ENCODE measurements at regions of chr22 and their contacts with region 1.

Region 1: DNA sequence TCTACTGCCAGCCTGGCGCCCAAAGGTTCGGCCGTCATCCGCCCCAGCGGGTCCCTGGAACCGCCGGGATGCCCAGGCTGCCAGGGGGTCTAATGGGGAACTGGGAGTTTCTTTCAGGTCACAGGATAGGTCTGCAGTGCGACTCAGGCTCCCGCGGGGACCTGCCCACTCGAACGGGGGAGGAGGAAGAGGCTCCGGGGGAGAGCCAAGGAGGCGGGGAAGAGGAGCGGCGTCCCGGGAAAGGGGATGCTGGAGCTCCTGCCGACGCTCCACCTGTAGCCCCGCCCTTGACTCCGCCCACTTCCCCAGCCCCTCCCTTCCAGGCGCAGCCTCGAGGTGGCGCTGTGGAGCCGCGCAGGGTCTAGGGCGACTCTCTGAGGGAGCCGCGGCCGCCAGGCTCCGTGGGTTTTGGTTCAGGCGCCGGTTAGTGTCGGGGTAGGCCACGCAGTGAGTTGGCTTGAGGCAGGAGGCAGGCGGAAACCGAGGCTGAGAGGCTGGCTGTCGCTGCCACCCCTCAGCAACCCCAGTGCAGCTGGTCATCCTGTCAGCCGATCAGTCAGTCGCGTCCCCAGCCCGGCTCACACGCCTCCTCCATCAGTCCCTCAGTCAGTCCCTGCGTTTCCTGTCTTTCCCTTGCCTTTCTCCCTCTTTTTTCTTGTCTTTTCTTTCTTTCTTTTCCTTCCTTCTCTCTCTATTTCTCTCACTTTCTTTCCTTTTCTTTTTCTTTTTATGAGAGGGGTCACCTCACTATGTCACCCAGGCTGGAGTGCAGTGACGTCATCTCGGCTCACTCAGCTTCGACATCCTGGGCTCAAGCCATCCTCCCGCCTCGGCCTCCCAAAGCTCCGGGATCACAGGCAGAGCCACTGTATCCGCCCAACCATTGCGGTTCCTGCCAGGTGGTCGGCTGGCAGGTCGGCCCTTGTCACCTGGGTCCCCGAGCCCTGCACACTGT is 26.4 kb downstream of the YWHAH start:
- DNase-seq: peak; percentile 90
- H3K4me3 Mint-ChIP-seq: peak overlapping the region; percentile 68
- H3K27ac Mint-ChIP-seq: no peak overlapping the region
- H3K4me1 Mint-ChIP-seq: peaks cover 11% of the 10 kb centered on the region
- H3K27me3 Mint-ChIP-seq: no peaks in the 10 kb centered on the region

Region 2: GRCh38 chr22:31954535-31955523 is 15.9 kb before region 1 on chr22:
- CTCF ChIA-PET with region 1: interaction called, 13 read pairs
- intact Hi-C with region 1: no loop called
- DNase-seq: no peak
- H3K4me3 Mint-ChIP-seq: no peak overlapping the region
- H3K27ac Mint-ChIP-seq: no peak overlapping the region
- H3K4me1 Mint-ChIP-seq: peaks cover 68% of the 10 kb centered on the region
- H3K27me3 Mint-ChIP-seq: no peaks in the 10 kb centered on the region

Region 3: GRCh38 chr22:31960767-31961166 is 10.0 kb before region 1 on chr22:
- CTCF ChIA-PET with region 1: interaction called, 12 read pairs
- intact Hi-C with region 1: no loop called
- DNase-seq: no peak
- H3K4me3 Mint-ChIP-seq: no peak overlapping the region
- H3K27ac Mint-ChIP-seq: no peak overlapping the region
- H3K4me1 Mint-ChIP-seq: peaks cover 15% of the 10 kb centered on the region
- H3K27me3 Mint-ChIP-seq: no peaks in the 10 kb centered on the region

Region 4: GRCh38 chr22:32265882-32266767 is 295.4 kb after region 1 on chr22:
- CTCF ChIA-PET with region 1: interaction called, 11 read pairs
- intact Hi-C with region 1: no loop called
- DNase-seq: peak; percentile 84
- H3K4me3 Mint-ChIP-seq: no peak overlapping the region
- H3K27ac Mint-ChIP-seq: no peak overlapping the region
- H3K4me1 Mint-ChIP-seq: peaks cover 8% of the 10 kb centered on the region
- H3K27me3 Mint-ChIP-seq: no peaks in the 10 kb centered on the region

Measured in activated naive CD4-positive, alpha-beta T cell treated with anti-CD3 and anti-CD28 coated beads for 36 hours (primary cell).